ENCODE measurements at regions of chr4 and their contacts with region 1.

Region 1: DNA sequence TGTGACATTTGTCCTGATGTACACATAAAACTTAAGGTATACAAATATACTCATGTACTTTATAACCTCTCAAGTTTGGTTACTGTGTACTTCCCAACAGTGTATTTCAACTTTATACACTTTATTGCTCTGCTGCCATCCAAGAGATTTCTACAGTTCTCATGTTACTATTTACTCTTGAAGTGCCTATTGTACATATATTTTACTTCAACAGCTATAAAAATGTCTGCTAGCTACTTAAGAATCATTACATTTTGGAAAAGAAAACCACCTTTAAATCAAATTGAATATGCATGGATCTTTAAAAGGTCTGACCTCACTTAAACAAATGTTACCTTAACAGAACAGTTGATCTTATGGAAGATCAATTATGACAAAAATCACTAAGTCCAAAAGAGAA is 1056.4 kb downstream of the ADGRL3 start:
- DNase-seq: no peak
- ATAC-seq: no peak
- H3K4me3 ChIP-seq: no peak overlapping the region
- H3K27ac ChIP-seq: no peak overlapping the region
- H3K4me1 ChIP-seq: no peaks in the 10 kb centered on the region
- H3K27me3 ChIP-seq: no peaks in the 10 kb centered on the region
- CTCF ChIP-seq: no peak

Region 2: GRCh38 chr4:63492515-63492914 is 1236.0 kb after region 1 on chr4:
- intact Hi-C with region 1: loop called in 1 of 10 experiments (anchors 5 kb)
- DNase-seq: no peak
- ATAC-seq: no peak
- H3K4me3 ChIP-seq: no peak overlapping the region
- H3K27ac ChIP-seq: no peak overlapping the region
- H3K4me1 ChIP-seq: no peaks in the 10 kb centered on the region
- H3K27me3 ChIP-seq: no peaks in the 10 kb centered on the region
- CTCF ChIP-seq: no peak

Measured in heart right ventricle (tissue), 16 donors.